Lower lobe of right lung (tissue), 2 donors: ENCODE measurements at regions of chr17 and their contacts with region 1.

Region 1: GRCh38 chr17:34361478-34362061 is 1.5 kb downstream of the CCL1 start:
- DNase-seq: peak; percentile 93
- ATAC-seq: peak; percentile 93 to 94
- H3K4me3 ChIP-seq: no peak overlapping the region
- H3K27ac ChIP-seq: no peak overlapping the region
- H3K4me1 ChIP-seq: peaks cover 4% of the 10 kb centered on the region
- H3K27me3 ChIP-seq: peaks cover 15% of the 10 kb centered on the region
- CTCF ChIP-seq: peak; percentile 96

Region 2: DNA sequence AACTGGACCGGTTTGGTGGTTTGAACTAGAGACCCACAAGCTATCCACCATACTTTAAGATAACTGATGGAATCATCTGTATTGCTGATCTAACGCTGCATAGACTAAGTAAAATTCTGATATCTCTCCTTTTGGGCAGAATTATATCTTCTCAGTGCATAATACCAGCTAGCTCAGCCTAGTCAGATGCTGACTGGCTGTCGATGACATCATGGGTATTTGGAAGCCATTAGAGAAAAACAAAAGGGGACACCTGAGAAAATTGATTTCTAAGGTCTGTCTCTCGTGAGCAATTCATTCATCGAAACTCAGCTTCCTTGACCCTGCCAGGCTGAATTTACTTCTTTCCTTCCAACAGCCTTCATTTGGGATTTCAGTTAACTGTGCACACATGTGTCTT is 369.5 kb before region 1 on chr17:
- intact Hi-C with region 1: no loop called
- DNase-seq: no peak
- ATAC-seq: no peak
- H3K4me3 ChIP-seq: no peak overlapping the region
- H3K27ac ChIP-seq: no peak overlapping the region
- H3K4me1 ChIP-seq: no peaks in the 10 kb centered on the region
- H3K27me3 ChIP-seq: peaks cover 3% of the 10 kb centered on the region
- CTCF ChIP-seq: no peak

Region 3: DNA sequence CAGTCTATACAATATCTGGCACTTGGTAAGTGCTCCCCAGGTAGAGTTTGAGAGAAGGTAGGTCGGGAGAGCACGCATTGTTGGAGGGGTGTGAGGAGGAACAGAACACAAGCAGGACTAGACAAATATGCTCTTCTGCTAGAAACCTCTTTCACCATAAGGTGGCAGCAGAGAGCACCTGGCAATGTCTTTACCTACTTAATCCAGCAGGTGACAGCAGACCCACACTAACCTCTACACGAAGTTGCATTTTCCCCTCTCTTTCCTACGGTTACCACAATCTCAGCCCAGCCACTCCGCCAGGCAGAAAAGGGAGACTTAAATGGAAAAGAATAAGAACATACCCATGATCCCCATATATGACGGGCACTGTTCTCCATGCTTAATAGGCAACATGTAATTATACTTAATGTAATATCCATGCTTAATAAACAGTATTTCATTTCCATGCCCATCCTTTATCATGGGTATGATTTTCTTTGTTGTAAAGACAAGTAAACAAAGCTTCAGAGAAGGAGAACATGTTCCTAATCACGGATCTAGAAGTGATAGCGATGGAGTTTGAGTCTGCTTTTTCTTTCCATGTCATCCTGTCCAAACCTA is 161.5 kb before region 1 on chr17:
- intact Hi-C with region 1: loop called (anchors 5 kb)
- DNase-seq: peak; percentile 48
- ATAC-seq: peak; percentile 92 to 96
- H3K4me3 ChIP-seq: no peak overlapping the region
- H3K27ac ChIP-seq: no peak overlapping the region
- H3K4me1 ChIP-seq: peaks cover 9% of the 10 kb centered on the region
- H3K27me3 ChIP-seq: no peaks in the 10 kb centered on the region
- CTCF ChIP-seq: peak; percentile 99

Region 4: DNA sequence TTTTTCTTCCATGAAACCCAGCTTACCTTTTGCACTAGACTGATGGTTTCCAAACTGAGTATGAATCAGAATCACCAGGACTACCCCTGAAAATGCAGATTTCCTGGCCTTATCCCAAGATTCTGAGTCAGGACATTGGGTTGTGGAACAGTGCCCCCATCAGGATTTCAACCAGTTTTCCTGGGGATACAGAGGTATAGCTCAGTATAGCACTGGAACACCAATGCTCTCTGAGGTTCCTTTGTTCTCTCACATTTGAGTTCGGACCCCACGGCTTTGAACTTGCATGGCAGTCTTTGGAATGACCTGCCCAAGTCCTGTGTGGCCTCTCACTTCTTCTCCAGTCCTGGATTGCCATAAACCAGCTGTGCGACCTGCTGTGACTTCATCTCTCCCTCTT is 55.1 kb before region 1 on chr17:
- intact Hi-C with region 1: no loop called
- DNase-seq: no peak
- ATAC-seq: peak; percentile 64 to 80
- H3K4me3 ChIP-seq: no peak overlapping the region
- H3K27ac ChIP-seq: no peak overlapping the region
- H3K4me1 ChIP-seq: peaks cover 19% of the 10 kb centered on the region
- H3K27me3 ChIP-seq: no peaks in the 10 kb centered on the region
- CTCF ChIP-seq: peak; percentile 46